HCT116 (cell line): ENCODE measurements at regions of chr10 and their contacts with region 1.

Region 1: GRCh38 chr10:91251430-91252056 is 31.1 kb downstream of the PCGF5 start:
- DNase-seq: peak; percentile 6
- ATAC-seq: peak; percentile 60; the same call in 1 of the 2 replicates
- H3K4me3 ChIP-seq: no peak overlapping the region
- H3K27ac ChIP-seq: no peak overlapping the region
- H3K4me1 ChIP-seq: no peaks in the 10 kb centered on the region
- H3K27me3 ChIP-seq: no peaks in the 10 kb centered on the region
- CTCF ChIP-seq: peak; percentile 78 to 87 (median 86)
- POLR2A ChIP-seq: no peak
- RAD21 ChIP-seq: peak; percentile 92

Region 2: GRCh38 chr10:90658791-90659190 is 592.8 kb before region 1 on chr10:
- CTCF ChIA-PET with region 1: no interaction called
- POLR2A ChIA-PET with region 1: no interaction called
- RAD21 ChIA-PET with region 1: no interaction called
- intact Hi-C with region 1: no loop called
- DNase-seq: peak; percentile 3
- ATAC-seq: peak; percentile 78
- H3K4me3 ChIP-seq: no peak overlapping the region
- H3K27ac ChIP-seq: no peak overlapping the region
- H3K4me1 ChIP-seq: no peaks in the 10 kb centered on the region
- H3K27me3 ChIP-seq: no peaks in the 10 kb centered on the region
- CTCF ChIP-seq: peak; percentile 12 to 44 (median 38); a peak in 4 of 6 replicates
- POLR2A ChIP-seq: no peak
- RAD21 ChIP-seq: peak; percentile 16; the same call in 1 of the 2 replicates

Region 3: GRCh38 chr10:90751107-90751997 is 500.2 kb before region 1 on chr10:
- CTCF ChIA-PET with region 1: no interaction called
- POLR2A ChIA-PET with region 1: no interaction called
- RAD21 ChIA-PET with region 1: no interaction called
- intact Hi-C with region 1: loop called (anchors 10 kb)
- DNase-seq: peak; percentile 45
- ATAC-seq: peak; percentile 99
- H3K4me3 ChIP-seq: no peak overlapping the region
- H3K27ac ChIP-seq: no peak overlapping the region
- H3K4me1 ChIP-seq: 0 out of 4 replicates have a peak, but pooled peaks cover 0 to 6% of the 10 kb centered on the region in 2 experiments
- H3K27me3 ChIP-seq: no peaks in the 10 kb centered on the region
- CTCF ChIP-seq: peak; percentile 73 to 91 (median 80)
- POLR2A ChIP-seq: no peak
- RAD21 ChIP-seq: peak; percentile 90

Region 4: GRCh38 chr10:90885176-90885575 is 366.4 kb before region 1 on chr10:
- CTCF ChIA-PET with region 1: interaction called, 3 read pairs
- POLR2A ChIA-PET with region 1: no interaction called
- RAD21 ChIA-PET with region 1: no interaction called
- intact Hi-C with region 1: loop called (anchors 2 kb)
- DNase-seq: no peak
- ATAC-seq: no peak
- H3K4me3 ChIP-seq: no peak overlapping the region
- H3K27ac ChIP-seq: no peak overlapping the region
- H3K4me1 ChIP-seq: no peaks in the 10 kb centered on the region; a peak in 1 of 4 replicates
- H3K27me3 ChIP-seq: no peaks in the 10 kb centered on the region
- CTCF ChIP-seq: no peak
- POLR2A ChIP-seq: no peak
- RAD21 ChIP-seq: no peak

Region 5: DNA sequence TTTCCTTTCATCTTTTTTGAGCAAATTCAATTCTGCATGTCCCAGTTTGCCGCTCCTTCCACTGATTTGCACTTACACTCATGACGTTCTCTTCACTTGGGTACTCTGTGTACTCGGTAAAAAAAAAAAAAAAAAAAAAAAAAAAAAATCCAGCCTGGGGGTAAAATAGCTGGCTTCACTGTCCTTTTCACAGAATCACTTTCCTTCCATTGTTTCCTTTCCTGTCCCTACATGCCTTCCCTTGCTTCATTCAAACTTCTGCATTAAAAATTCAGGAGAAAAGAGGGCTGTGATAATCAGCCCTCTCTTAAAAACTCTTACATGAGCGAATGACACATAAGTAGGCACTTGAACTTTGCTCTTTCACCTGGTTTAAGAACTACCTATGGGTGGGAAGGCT is 339.4 kb before region 1 on chr10:
- CTCF ChIA-PET with region 1: interaction called, 39 read pairs
- POLR2A ChIA-PET with region 1: no interaction called
- RAD21 ChIA-PET with region 1: interaction called, 4 to 5 read pairs
- intact Hi-C with region 1: loop called (anchors 1 kb)
- DNase-seq: no peak
- ATAC-seq: no peak
- H3K4me3 ChIP-seq: no peak overlapping the region
- H3K27ac ChIP-seq: no peak overlapping the region
- H3K4me1 ChIP-seq: peaks cover 0 to 2% of the 10 kb centered on the region in 2 experiments; a peak in 1 of 4 replicates
- H3K27me3 ChIP-seq: no peaks in the 10 kb centered on the region
- CTCF ChIP-seq: no peak
- POLR2A ChIP-seq: no peak
- RAD21 ChIP-seq: no peak

Region 6: GRCh38 chr10:91006001-91006751 is 245.4 kb before region 1 on chr10:
- CTCF ChIA-PET with region 1: interaction called, 42 read pairs
- POLR2A ChIA-PET with region 1: interaction called, 3 read pairs
- RAD21 ChIA-PET with region 1: interaction called, 3 read pairs
- intact Hi-C with region 1: loop called (anchors 1 kb)
- DNase-seq: peak; percentile 51
- ATAC-seq: peak; percentile 93
- H3K4me3 ChIP-seq: no peak overlapping the region
- H3K27ac ChIP-seq: no peak overlapping the region
- H3K4me1 ChIP-seq: no peaks in the 10 kb centered on the region
- H3K27me3 ChIP-seq: no peaks in the 10 kb centered on the region
- CTCF ChIP-seq: peak; percentile 84 to 96 (median 91)
- POLR2A ChIP-seq: no peak
- RAD21 ChIP-seq: peak; percentile 94

Region 7: GRCh38 chr10:91043173-91043910 is 208.2 kb before region 1 on chr10:
- CTCF ChIA-PET with region 1: interaction called, 13 read pairs
- POLR2A ChIA-PET with region 1: no interaction called
- RAD21 ChIA-PET with region 1: interaction called in 1 of 2 experiments, 4 read pairs
- intact Hi-C with region 1: loop called (anchors 1 kb)
- DNase-seq: peak; percentile 21
- ATAC-seq: peak; percentile 90
- H3K4me3 ChIP-seq: no peak overlapping the region
- H3K27ac ChIP-seq: no peak overlapping the region
- H3K4me1 ChIP-seq: no peaks in the 10 kb centered on the region
- H3K27me3 ChIP-seq: no peaks in the 10 kb centered on the region
- CTCF ChIP-seq: peak; percentile 49 to 60 (median 59); a peak in 5 of 6 replicates
- POLR2A ChIP-seq: no peak
- RAD21 ChIP-seq: peak; percentile 76

Region 8: DNA sequence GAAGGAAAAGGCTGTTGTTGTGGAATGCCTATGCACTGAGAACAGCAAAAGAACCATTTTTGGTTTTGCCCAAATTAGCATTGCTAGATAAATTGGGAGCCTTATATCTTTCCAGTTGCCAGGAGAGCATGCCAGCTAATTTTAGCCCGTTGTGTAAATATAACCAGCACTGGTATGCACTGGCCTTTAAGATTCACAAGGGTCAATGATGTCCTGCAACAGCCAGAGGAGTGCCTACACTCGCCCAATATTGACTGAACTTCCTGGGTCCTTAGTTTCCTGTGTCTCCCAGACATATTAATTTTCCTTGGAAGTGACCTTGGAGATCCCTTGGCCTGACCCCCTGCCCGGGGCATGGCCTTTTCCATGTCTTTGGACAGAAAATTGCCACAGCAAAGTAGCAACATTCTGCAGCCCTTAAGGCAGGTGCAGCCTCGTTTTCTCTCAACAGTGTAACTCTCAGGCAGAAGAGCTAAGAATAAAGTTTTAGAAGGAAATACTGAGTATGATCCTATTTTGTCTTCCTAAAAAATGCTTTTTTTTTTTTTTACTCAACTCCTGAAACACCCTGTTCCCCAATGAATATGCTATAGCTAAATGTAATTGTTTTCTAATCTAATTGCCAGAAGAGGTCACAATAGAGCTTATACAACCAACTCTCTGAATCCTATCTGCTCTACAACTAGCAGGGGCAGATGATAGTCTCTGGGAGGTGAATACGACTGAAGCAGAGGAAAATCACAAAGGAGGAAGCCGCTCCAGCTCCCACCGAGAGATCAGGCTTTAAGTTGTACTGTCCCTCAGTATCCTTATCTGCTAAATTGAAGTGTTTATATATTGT is 163.0 kb before region 1 on chr10:
- CTCF ChIA-PET with region 1: interaction called, 12 read pairs
- POLR2A ChIA-PET with region 1: interaction called, 3 read pairs
- RAD21 ChIA-PET with region 1: interaction called in 1 of 2 experiments, 4 read pairs
- intact Hi-C with region 1: loop called (anchors 1 kb)
- DNase-seq: peak; percentile 1
- ATAC-seq: peak; percentile 50; the same call in 1 of the 2 replicates
- H3K4me3 ChIP-seq: no peak overlapping the region
- H3K27ac ChIP-seq: no peak overlapping the region
- H3K4me1 ChIP-seq: no peaks in the 10 kb centered on the region
- H3K27me3 ChIP-seq: no peaks in the 10 kb centered on the region
- CTCF ChIP-seq: peak in 2 of 3 experiments; percentile 18 to 19; a peak in 1 of 6 replicates
- POLR2A ChIP-seq: no peak
- RAD21 ChIP-seq: peak; percentile 48